AG04450 (cell line): ENCODE measurements at regions of chr1 and their contacts with region 1.

Region 1: DNA sequence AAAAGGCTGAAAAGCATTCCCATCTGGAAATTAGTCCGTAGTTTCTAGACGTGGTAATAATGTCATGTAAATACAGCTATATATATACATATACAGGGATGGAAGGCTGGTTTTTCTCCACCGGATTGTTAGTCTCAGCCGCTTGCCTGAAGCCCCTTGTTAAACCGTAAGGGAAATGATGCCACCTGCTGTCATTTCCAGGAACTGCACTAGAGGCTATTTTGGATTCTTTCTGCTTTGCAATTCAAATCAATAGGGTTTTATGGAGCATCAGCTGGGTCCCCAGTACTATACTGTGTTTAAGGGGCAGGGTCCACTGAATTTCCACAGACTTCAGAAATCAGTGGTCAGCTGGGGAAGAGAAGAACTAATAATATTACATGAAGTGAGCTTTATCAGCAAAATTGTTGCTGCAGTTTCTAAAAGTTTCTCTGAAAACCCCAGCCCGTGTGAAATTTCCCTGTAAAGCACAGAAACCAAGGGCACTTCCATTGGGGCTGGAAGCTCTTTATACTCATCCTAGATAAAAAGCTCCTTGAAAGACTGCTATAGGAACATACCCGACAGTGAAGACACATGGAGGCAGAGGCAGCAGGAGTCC is 33.8 kb upstream of the MPZL1 start:
- DNase-seq: peak; percentile 68
- H3K4me3 ChIP-seq: no peak overlapping the region
- H3K27ac ChIP-seq: no peak overlapping the region
- H3K27me3 ChIP-seq: peaks cover 13% of the 10 kb centered on the region
- CTCF ChIP-seq: peak; percentile 95

Region 2: GRCh38 chr1:167322483-167322882 is 365.5 kb before region 1 on chr1:
- CTCF ChIA-PET with region 1: no interaction called
- POLR2A ChIA-PET with region 1: no interaction called
- DNase-seq: no peak
- H3K4me3 ChIP-seq: no peak overlapping the region
- H3K27ac ChIP-seq: no peak overlapping the region
- H3K27me3 ChIP-seq: no peaks in the 10 kb centered on the region
- CTCF ChIP-seq: no peak

Region 3: DNA sequence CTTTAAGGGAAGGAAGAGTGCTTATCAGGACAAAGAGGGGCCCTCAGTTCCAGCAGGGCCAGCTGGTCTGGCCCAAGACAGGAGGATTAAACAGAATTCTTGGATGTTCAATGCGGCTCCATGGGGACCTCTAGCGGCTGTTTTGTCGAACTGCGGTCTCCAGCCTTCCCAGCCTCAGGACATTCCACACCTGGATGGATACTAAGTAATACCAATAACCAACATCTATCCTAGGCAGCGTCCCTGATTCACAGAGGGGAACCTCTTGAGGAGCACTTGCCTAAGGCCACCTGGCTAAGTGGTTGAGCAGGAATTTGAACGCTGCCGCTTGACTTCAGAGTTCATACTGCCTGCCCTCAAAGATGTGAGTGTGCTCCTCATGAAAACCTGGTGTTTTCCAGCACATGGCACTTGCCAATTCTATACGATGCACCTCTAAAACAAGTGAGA is 154.1 kb before region 1 on chr1:
- CTCF ChIA-PET with region 1: interaction called, 11 read pairs
- POLR2A ChIA-PET with region 1: no interaction called
- DNase-seq: peak; percentile 18
- H3K4me3 ChIP-seq: no peak overlapping the region
- H3K27ac ChIP-seq: no peak overlapping the region
- H3K27me3 ChIP-seq: peaks cover 5% of the 10 kb centered on the region
- CTCF ChIP-seq: peak; percentile 96

Region 4: DNA sequence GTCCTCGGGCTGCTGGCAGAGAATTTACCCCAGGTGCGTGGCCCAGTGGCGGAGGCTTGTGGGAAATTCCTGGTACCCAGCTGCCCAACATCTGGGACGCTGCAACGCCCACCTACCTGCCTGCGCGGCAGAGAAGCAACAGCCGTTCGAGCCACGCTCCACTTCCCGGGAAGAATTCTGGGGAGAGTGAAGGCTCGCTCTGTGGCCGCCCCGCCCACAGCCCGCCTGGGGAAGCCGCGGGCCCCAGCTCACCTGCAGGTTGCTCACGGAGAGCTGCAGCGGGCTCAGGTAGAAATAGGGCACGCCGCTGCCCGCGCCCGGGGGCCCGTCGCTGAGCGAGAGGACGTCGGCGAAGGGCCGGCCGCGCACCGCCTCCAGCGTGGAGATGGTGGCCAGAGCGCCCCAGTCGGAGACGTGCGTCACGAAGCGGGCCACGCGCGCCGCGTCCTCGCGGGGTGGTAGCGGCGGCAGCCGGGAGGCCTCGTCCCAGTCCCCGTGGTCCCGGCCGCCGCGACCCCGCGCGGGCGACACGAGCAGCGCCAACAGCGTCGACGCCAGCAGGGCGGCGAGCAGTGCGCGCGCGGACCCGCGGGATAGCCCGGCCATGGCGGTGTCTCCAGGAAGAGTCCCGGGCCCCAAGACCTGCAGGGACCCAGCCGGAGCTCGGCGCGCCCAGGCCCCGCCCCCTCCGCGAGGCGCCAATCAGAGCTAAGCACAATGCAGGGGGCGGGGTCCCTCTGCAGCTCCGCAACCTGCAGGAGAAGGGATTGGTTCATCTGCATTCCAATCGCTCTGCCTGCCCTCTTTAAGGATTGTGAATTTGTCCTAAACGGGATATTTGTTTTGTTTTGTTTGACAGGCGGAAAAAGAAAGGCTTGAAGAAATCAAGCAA is 134.6 kb before region 1 on chr1 and contains the start of gene CREG1:
- CTCF ChIA-PET with region 1: interaction called, 34 read pairs
- POLR2A ChIA-PET with region 1: interaction called, 3 read pairs
- DNase-seq: peak; percentile 59
- H3K4me3 ChIP-seq: peak within 1 kb of the TSS; percentile 60
- H3K27ac ChIP-seq: no peak within 1 kb of the TSS
- H3K27me3 ChIP-seq: peaks cover 10% of the 10 kb centered on the region
- CTCF ChIP-seq: no peak
- polyA plus RNA-seq, gene CREG1: 23.1 and 31.2 TPM in 2 replicates

Region 5: DNA sequence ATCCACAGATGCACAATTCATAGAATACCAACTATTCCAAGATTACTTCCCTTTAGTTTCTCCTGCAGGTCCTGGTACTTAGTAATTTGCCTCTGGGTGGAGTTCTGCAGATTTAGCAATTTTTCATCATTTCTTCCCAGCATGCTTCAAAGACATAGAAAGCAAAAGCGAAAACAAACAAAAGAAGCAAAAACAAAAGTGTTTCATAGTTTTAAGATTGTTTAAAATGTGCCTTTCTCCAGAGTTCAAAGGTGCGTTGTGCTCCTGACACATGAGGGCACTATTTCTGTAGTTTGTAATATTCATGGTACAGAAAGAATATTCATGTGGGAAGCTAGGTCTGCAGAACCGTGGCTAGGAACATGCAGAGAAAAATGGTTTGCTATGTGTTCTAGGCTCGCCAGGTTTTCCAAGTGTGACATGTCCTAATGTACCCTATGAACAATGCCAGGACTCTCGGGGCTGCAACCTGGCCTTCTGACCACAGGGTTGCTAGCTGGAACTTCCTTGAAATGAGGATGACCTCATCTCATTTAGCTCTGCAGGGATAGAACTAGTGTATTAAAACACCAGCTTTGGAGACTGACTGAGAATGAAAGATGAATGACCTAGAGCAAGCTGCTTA is 88.0 kb before region 1 on chr1:
- CTCF ChIA-PET with region 1: interaction called, 72 read pairs
- POLR2A ChIA-PET with region 1: no interaction called
- DNase-seq: no peak
- H3K4me3 ChIP-seq: no peak overlapping the region
- H3K27ac ChIP-seq: no peak overlapping the region
- H3K27me3 ChIP-seq: peaks cover 7% of the 10 kb centered on the region
- CTCF ChIP-seq: peak; percentile 45

Region 6: DNA sequence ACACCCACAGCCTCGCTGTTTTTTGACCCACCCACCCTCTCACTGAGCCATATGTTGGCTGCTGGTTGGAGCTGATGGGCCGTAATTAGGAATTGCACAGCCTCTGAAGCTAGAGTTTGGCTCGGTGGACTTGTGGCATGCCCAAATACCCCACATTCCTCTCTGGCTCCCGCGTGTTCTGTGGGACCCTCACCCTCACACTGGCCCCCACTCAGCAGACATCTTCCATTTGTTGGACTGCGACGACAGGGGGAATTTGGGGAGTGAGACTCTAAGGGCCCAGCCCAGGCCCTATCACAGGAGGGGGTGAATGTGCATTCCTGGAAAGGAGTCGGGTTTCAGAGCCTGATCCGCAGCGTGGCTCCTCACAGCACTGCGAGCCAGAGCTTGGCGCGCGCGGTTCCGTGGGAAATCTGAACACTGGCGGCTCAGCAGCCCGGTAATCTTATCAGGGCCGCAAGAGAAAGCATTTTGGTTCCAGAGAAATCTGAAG is 52.8 kb before region 1 on chr1:
- CTCF ChIA-PET with region 1: interaction called, 10 read pairs
- POLR2A ChIA-PET with region 1: no interaction called
- DNase-seq: no peak
- H3K4me3 ChIP-seq: no peak overlapping the region
- H3K27ac ChIP-seq: peak overlapping the region; percentile 21
- H3K27me3 ChIP-seq: peaks cover 54% of the 10 kb centered on the region
- CTCF ChIP-seq: no peak

Region 7: GRCh38 chr1:167676205-167676915 is 11.7 kb before region 1 on chr1:
- CTCF ChIA-PET with region 1: interaction called, 13 read pairs
- POLR2A ChIA-PET with region 1: no interaction called
- DNase-seq: no peak
- H3K4me3 ChIP-seq: no peak overlapping the region
- H3K27ac ChIP-seq: no peak overlapping the region
- H3K27me3 ChIP-seq: peaks cover 30% of the 10 kb centered on the region
- CTCF ChIP-seq: no peak

Region 8: GRCh38 chr1:167790117-167790516 is 102.1 kb after region 1 on chr1:
- CTCF ChIA-PET with region 1: no interaction called
- POLR2A ChIA-PET with region 1: no interaction called
- DNase-seq: no peak
- H3K4me3 ChIP-seq: no peak overlapping the region
- H3K27ac ChIP-seq: no peak overlapping the region
- H3K27me3 ChIP-seq: no peaks in the 10 kb centered on the region
- CTCF ChIP-seq: no peak

Region 9: DNA sequence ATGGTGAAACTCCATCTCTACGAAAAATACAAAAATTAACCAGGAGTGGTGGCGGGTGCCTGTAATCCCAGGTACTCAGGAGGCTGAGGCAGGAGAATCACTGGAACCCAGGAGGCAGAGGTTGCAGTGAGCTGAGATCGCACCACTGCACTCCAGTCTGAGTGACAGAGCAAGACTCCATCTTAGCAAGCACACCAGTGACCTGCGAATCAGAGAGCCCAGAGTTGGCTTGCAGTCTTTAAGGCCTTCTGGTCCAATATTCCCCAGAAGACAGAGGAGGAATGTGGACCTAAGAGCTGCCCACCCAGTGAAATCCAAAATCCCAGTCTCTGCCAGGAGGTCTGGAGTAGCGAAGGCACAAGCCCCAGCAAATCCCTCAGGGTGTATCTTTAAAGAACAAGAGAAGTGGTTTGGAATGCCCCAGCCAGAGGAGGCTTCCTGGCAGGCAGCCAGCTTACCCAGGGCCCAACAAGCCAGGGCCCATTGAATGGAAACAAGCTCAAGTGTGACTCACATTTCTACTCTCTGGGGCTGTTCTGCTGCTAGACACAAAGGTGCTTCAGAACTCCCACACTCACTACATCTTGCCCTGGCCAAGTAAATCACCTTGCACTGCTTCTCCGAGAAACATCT is 424.8 kb after region 1 on chr1:
- CTCF ChIA-PET with region 1: no interaction called
- POLR2A ChIA-PET with region 1: no interaction called
- DNase-seq: peak; percentile 36
- H3K4me3 ChIP-seq: no peak overlapping the region
- H3K27ac ChIP-seq: no peak overlapping the region
- H3K27me3 ChIP-seq: no peaks in the 10 kb centered on the region
- CTCF ChIP-seq: no peak